ENCODE measurements at regions of chr5 and their contacts with region 1.

Region 1: DNA sequence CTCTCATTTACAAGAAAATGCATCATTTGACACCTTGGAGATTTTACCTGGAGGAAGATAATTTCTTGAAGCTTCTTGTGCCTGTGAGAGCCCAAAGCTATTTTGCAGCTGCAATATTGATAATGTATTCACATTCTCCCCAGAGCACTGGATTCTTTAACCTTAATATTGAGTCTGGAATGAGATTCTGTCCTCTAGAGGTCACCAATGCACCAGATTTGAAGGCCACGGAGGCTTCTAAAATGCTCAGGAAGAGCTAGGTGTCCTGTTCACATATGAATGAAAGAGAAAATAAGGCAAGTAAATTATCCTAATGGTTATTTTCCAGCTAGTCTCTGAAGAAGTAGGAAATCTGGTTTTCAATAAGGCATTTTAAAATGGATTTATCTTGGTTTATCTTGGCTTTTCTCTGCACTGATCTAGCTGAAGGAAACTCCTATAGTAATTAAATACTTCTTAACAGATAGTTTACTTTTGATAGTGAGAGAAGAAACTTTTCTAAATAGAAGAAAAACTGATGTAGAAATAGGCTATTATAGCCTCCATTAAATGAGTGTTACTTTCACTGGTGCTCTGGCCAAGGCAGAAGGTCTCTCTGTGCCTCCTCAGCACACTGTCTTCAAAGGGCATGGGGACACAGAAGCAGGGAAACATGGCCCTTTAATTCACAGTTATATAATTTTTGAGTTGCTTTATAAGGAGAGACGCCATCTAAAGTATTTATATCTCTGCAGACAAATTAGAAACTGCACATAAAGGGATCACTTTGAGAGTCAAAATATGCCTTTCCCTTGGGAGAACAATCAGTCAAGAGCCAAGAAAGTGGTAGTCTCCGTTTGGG is 297.0 kb upstream of the ACTBL2 start:
- DNase-seq: peak in 1 of 3 donors; percentile 55
- ATAC-seq: peak; percentile 72 to 88 (median 79)
- H3K4me3 ChIP-seq: no peak overlapping the region
- H3K27ac ChIP-seq: no peak overlapping the region
- H3K4me1 ChIP-seq: peaks cover 0 to 18% (median 0%) of the 10 kb centered on the region in 4 donors
- H3K27me3 ChIP-seq: no peaks in the 10 kb centered on the region
- CTCF ChIP-seq: peak; percentile 63 to 71 (median 66)
- POLR2A ChIP-seq: no peak

Region 2: GRCh38 chr5:57221049-57221568 is 558.5 kb before region 1 on chr5:
- intact Hi-C with region 1: no loop called
- DNase-seq: no peak
- ATAC-seq: peak; percentile 79 to 86 (median 83)
- H3K4me3 ChIP-seq: no peak overlapping the region
- H3K27ac ChIP-seq: no peak overlapping the region
- H3K4me1 ChIP-seq: peaks cover 0 to 21% (median 3%) of the 10 kb centered on the region in 4 donors
- H3K27me3 ChIP-seq: no peaks in the 10 kb centered on the region
- CTCF ChIP-seq: peak; percentile 90 to 96 (median 92)
- POLR2A ChIP-seq: no peak

Region 3: GRCh38 chr5:57650360-57651069 is 129.1 kb before region 1 on chr5:
- intact Hi-C with region 1: loop called in 1 of 2 experiments (anchors 10 kb)
- DNase-seq: peak; percentile 72 to 89 (median 86)
- ATAC-seq: peak; percentile 93 to 99 (median 98)
- H3K4me3 ChIP-seq: peak overlapping the region; percentile 29 to 56 (median 35)
- H3K27ac ChIP-seq: peak overlapping the region; percentile 72 to 89 (median 85)
- H3K4me1 ChIP-seq: peaks cover 0 to 35% (median 0%) of the 10 kb centered on the region in 4 donors
- H3K27me3 ChIP-seq: no peaks in the 10 kb centered on the region
- CTCF ChIP-seq: peak; percentile 71 to 96 (median 79)
- POLR2A ChIP-seq: peak; percentile 81